Head of caudate nucleus (tissue), 42 donors: ENCODE measurements at regions of chr6 and their contacts with region 1.

Region 1: GRCh38 chr6:84227434-84228197 is at the start of gene CEP162:
- DNase-seq: peak; percentile 93 to 100 (median 98)

Region 2: GRCh38 chr6:83859410-83860358 is 367.9 kb before region 1 on chr6 and contains the start of gene CYB5R4:
- intact Hi-C with region 1: loop called (anchors 10 kb)
- DNase-seq: peak; percentile 87 to 98 (median 95)

Region 3: DNA sequence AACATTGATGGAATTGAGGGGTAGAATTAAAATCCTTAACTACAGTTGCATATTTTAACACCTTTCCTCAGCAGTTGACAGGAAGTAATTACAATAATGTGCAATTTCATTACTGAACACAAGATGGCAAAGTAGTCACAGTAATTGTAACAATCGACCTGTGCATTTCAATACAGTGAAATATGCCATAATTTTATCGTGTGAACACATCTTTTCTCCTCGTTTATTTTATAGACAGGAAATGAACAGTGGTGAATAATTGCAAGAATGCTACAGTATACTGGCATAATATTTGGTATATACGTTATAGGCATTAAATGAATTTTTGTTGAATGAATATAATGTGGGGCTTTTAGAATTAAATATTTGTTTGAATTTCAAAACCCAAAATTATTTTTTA is 343.1 kb before region 1 on chr6:
- intact Hi-C with region 1: loop called (anchors 10 kb)
- DNase-seq: no peak

Region 4: DNA sequence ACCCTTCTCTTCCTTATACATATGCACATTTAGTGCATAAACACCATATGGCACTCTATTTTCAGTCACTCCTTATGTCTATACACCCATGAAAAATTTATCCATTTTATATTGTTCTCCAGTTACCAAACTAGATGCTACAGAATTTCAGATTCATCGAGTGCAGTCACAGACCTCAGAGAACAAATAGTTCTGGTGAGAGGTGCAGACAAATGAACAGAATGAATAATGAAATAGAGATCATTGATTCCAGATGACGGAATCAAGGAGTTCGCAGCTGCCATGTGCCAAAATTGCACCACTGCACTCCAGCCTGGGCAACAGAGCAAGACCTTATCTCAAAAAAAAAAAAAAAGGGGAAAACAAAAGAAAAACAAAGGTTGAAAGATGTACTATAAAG is 214.6 kb after region 1 on chr6:
- intact Hi-C with region 1: no loop called
- DNase-seq: no peak

Region 5: GRCh38 chr6:84645000-84645399 is 417.4 kb after region 1 on chr6:
- intact Hi-C with region 1: no loop called
- DNase-seq: no peak